Endothelial cell of umbilical vein (primary cell): ENCODE measurements at regions of chr21 and their contacts with region 1.

Region 1: GRCh38 chr21:33641336-33642026 is at the start of gene CRYZL1:
- DNase-seq: peak; percentile 99
- H3K4me3 ChIP-seq: peak within 1 kb of the TSS; percentile 54 to 84 (median 76)
- H3K27ac ChIP-seq: peak within 1 kb of the TSS; percentile 66
- H3K4me1 ChIP-seq: peaks cover 19% of the 10 kb centered on the region
- H3K27me3 ChIP-seq: no peaks in the 10 kb centered on the region
- CTCF ChIP-seq: no peak
- POLR2A ChIP-seq: peak; percentile 62
- total RNA-seq, gene CRYZL1: 41.1 and 42.1 TPM in 2 replicates

Region 2: DNA sequence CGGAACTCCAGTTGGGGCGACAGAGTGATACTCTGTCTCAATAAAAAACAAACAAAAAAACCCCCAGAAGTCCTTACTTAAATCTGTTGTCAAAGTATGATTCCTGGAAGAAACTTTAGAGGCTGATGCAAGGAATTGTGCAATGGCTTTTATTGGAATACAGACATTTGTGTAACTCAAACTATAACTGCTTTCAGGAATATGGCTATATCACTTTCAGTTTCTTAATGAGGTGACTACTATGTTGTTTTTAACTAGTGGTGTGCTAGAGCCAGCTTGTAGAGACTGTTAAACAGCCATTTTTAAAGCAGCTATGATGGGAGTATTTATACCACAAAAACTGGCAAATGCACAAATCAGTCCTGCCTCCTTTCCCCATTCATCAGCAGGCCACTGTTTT is 127.3 kb before region 1 on chr21:
- CTCF ChIA-PET with region 1: no interaction called
- POLR2A ChIA-PET with region 1: no interaction called
- dilution Hi-C with region 1: no loop called
- intact Hi-C with region 1: no loop called
- DNase-seq: no peak
- H3K4me3 ChIP-seq: no peak overlapping the region
- H3K27ac ChIP-seq: no peak overlapping the region
- H3K4me1 ChIP-seq: no peaks in the 10 kb centered on the region
- H3K27me3 ChIP-seq: no peaks in the 10 kb centered on the region
- CTCF ChIP-seq: no peak
- POLR2A ChIP-seq: no peak

Region 3: GRCh38 chr21:33619726-33620125 is 21.8 kb before region 1 on chr21:
- CTCF ChIA-PET with region 1: no interaction called
- POLR2A ChIA-PET with region 1: no interaction called
- dilution Hi-C with region 1: no loop called
- intact Hi-C with region 1: no loop called
- DNase-seq: no peak
- H3K4me3 ChIP-seq: no peak overlapping the region
- H3K27ac ChIP-seq: no peak overlapping the region
- H3K4me1 ChIP-seq: no peaks in the 10 kb centered on the region
- H3K27me3 ChIP-seq: no peaks in the 10 kb centered on the region
- CTCF ChIP-seq: no peak
- POLR2A ChIP-seq: no peak

Region 4: DNA sequence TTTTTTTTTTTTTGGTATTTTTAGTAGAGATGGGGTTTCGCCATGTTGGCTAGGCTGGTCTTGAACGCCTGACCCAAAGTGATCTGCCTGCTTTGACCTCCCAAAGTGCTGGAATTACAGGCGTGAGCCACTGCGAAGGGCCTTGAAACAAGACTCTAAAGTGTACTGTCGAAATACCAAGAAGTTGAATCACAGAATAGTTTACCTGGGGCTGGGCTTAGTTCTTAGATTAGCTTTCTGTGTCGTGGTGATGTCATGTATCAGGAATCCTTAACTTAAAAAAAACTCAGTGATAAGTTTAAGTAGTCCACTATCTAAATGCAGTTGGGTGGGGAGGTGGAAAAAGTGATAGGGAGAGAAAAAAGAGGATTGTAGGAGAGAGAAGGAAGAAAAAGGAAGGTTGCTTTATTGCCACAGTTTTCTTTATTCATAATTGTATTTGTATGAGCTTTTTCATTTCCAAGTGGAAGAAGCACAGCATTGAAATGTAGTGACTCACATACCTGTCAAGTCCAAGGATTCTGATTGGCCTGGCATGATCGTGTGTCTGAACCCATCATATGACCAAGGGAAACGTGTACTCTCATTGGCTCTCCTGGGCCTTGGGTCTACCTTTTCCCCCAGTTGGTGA is 14.2 kb after region 1 on chr21:
- CTCF ChIA-PET with region 1: interaction called, 7 read pairs
- POLR2A ChIA-PET with region 1: no interaction called
- dilution Hi-C with region 1: no loop called
- intact Hi-C with region 1: loop called (anchors 1 kb)
- DNase-seq: peak; percentile 90
- H3K4me3 ChIP-seq: no peak overlapping the region
- H3K27ac ChIP-seq: peak overlapping the region; percentile 81
- H3K4me1 ChIP-seq: peaks cover 52% of the 10 kb centered on the region
- H3K27me3 ChIP-seq: no peaks in the 10 kb centered on the region
- CTCF ChIP-seq: no peak
- POLR2A ChIP-seq: no peak

Region 5: GRCh38 chr21:33682992-33683627 is 41.6 kb after region 1 on chr21:
- CTCF ChIA-PET with region 1: no interaction called
- POLR2A ChIA-PET with region 1: no interaction called
- dilution Hi-C with region 1: no loop called
- intact Hi-C with region 1: loop called (anchors 1 kb)
- DNase-seq: peak; percentile 90
- H3K4me3 ChIP-seq: no peak overlapping the region
- H3K27ac ChIP-seq: peak overlapping the region; percentile 93
- H3K4me1 ChIP-seq: peaks cover 44% of the 10 kb centered on the region
- H3K27me3 ChIP-seq: no peaks in the 10 kb centered on the region
- CTCF ChIP-seq: no peak
- POLR2A ChIP-seq: no peak

Region 6: GRCh38 chr21:33712022-33712803 is 70.7 kb after region 1 on chr21:
- CTCF ChIA-PET with region 1: no interaction called
- POLR2A ChIA-PET with region 1: no interaction called
- dilution Hi-C with region 1: no loop called
- intact Hi-C with region 1: loop called (anchors 5 kb)
- DNase-seq: peak; percentile 43
- H3K4me3 ChIP-seq: no peak overlapping the region
- H3K27ac ChIP-seq: no peak overlapping the region
- H3K4me1 ChIP-seq: peaks cover 3% of the 10 kb centered on the region
- H3K27me3 ChIP-seq: no peaks in the 10 kb centered on the region
- CTCF ChIP-seq: no peak
- POLR2A ChIP-seq: no peak

Region 7: GRCh38 chr21:33799378-33800090 is 158.1 kb after region 1 on chr21:
- CTCF ChIA-PET with region 1: no interaction called
- POLR2A ChIA-PET with region 1: no interaction called
- dilution Hi-C with region 1: no loop called
- intact Hi-C with region 1: no loop called
- DNase-seq: no peak
- H3K4me3 ChIP-seq: no peak overlapping the region
- H3K27ac ChIP-seq: no peak overlapping the region
- H3K4me1 ChIP-seq: no peaks in the 10 kb centered on the region
- H3K27me3 ChIP-seq: no peaks in the 10 kb centered on the region
- CTCF ChIP-seq: no peak
- POLR2A ChIP-seq: no peak

Region 8: GRCh38 chr21:33811167-33812010 is 169.9 kb after region 1 on chr21:
- CTCF ChIA-PET with region 1: no interaction called
- POLR2A ChIA-PET with region 1: no interaction called
- dilution Hi-C with region 1: no loop called
- intact Hi-C with region 1: loop called (anchors 5 kb)
- DNase-seq: peak; percentile 40
- H3K4me3 ChIP-seq: no peak overlapping the region
- H3K27ac ChIP-seq: no peak overlapping the region
- H3K4me1 ChIP-seq: peaks cover 12% of the 10 kb centered on the region
- H3K27me3 ChIP-seq: no peaks in the 10 kb centered on the region
- CTCF ChIP-seq: no peak
- POLR2A ChIP-seq: no peak

Region 9: GRCh38 chr21:33894736-33895288 is 253.3 kb after region 1 on chr21:
- CTCF ChIA-PET with region 1: interaction called, 6 read pairs
- POLR2A ChIA-PET with region 1: no interaction called
- dilution Hi-C with region 1: no loop called
- intact Hi-C with region 1: loop called (anchors 1 kb)
- DNase-seq: peak; percentile 92
- H3K4me3 ChIP-seq: peak overlapping the region in 1 of 3 experiments; percentile 3
- H3K27ac ChIP-seq: no peak overlapping the region
- H3K4me1 ChIP-seq: peaks cover 30% of the 10 kb centered on the region
- H3K27me3 ChIP-seq: no peaks in the 10 kb centered on the region
- CTCF ChIP-seq: peak; percentile 75 to 78
- POLR2A ChIP-seq: no peak

Region 10: DNA sequence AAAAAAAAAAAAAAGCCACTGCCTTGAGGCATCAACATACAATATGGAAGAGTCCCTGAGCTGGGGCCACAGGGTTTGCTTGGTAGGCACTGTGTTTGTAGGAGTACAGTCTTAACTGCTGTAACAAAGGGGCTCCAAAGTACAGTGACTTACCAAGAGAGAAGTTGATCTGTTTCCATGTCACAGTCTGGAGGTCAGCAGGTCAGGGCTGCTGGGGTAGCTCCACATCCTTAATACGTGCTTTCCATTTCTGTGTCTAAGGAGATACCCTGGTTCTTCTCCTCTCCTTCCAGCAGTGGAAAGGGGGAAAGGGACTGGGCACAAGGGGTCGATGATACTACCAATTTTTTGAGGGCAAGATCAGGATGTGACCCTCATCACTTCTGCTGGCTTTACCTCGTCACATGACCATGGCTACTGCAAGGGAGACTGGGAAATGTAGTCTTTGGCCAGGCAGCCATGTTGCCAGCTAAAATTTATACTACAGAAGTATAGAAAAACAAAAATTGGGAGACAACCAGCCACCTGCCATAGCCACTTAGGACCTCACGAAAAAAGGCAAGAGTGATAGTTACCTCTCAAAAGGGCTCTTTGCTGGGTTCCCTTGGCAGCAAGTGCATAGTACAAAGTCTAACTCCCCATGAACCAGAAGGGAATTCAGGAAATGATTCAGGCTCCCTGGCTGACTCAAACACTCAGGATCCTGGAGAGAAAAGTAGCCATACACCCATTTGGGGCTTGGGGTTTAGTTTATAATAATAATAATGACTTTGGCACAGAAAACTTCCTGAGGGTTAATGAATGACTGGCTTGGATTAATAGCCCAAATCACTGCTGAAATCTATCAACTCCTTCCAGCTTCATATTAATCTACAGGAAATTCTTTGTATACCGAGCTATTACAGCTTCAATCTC is 326.9 kb after region 1 on chr21:
- CTCF ChIA-PET with region 1: no interaction called
- POLR2A ChIA-PET with region 1: no interaction called
- dilution Hi-C with region 1: no loop called
- intact Hi-C with region 1: no loop called
- DNase-seq: peak; percentile 97
- H3K4me3 ChIP-seq: peak overlapping the region in 1 of 3 experiments; percentile 10
- H3K27ac ChIP-seq: peak overlapping the region; percentile 84
- H3K4me1 ChIP-seq: peaks cover 36% of the 10 kb centered on the region
- H3K27me3 ChIP-seq: peaks cover 0 to 3% of the 10 kb centered on the region in 2 experiments
- CTCF ChIP-seq: no peak
- POLR2A ChIP-seq: no peak